MCF 10A (cell line): ENCODE measurements at regions of chr17 and their contacts with region 1.

Region 1: GRCh38 chr17:59753522-59754467 is 46.3 kb downstream of the VMP1 start:
- DNase-seq: peak; percentile 86
- H3K4me3 Mint-ChIP-seq: peak overlapping the region; percentile 56
- H3K27ac Mint-ChIP-seq: peak overlapping the region; percentile 83
- H3K4me1 Mint-ChIP-seq: peaks cover 23% of the 10 kb centered on the region
- H3K27me3 Mint-ChIP-seq: no peaks in the 10 kb centered on the region
- CTCF ChIP-seq: peak; percentile 62

Region 2: DNA sequence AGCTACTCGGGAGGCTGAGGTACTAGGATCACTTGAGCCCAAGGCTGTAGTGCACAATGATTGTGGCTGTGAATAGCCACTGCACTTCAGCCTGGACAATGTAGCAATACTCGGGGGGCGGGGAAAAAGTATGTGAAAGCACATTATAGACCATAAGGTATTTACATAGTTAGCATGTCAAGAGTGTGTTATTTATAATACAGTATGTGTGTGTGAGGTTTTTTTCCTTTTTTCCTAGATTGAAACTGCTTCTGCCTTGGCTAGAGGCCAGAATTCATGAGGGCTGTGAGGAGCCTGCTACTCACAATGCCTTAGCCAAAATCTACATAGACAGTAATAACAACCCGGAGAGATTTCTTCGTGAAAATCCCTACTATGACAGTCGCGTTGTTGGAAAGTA is 77.1 kb before region 1 on chr17:
- CTCF ChIA-PET with region 1: no interaction called
- POLR2A ChIA-PET with region 1: no interaction called
- intact Hi-C with region 1: no loop called
- DNase-seq: no peak
- H3K4me3 Mint-ChIP-seq: no peak overlapping the region
- H3K27ac Mint-ChIP-seq: no peak overlapping the region
- H3K4me1 Mint-ChIP-seq: peaks cover 8% of the 10 kb centered on the region
- H3K27me3 Mint-ChIP-seq: no peaks in the 10 kb centered on the region
- CTCF ChIP-seq: no peak

Region 3: DNA sequence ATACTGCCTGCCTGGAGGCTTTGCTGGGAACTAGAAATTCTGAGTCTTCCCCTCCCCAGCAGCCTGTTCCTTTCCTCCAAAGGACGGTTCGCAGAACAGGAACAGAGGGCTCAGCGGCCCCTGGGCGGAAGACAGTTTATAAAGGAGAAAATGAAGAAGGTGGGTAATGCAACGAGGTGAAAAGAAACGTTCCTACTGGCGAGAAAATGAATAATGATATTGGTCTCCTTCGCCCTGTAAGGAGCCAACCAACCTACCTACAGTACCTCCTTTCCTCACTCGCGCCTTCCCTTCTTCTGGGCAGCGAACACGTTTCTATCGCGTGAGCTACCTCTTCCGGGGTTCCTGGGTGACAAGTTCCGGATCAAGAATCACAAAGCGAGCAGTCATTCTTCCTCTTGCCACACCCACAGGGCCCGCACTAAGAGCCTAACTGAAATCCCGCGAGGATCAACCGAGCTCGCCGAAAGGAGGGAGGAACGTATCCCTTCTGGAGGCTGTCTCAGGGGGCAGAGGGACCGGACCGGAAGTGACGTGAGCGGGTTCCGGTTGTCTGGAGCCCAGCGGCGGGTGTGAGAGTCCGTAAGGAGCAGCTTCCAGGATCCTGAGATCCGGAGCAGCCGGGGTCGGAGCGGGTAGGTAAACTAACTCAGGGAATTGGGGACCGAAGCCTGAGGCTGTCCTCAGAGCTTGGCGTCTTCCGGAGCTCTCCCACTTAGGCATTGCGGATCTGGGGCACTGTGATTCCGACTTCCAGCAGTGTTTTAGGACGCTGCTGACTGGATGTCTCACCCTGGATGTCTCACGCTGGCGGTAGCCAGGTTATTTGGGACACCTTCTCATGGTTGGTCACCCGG is 46.5 kb before region 1 on chr17 and contains the starts of genes PTRH2 and VMP1:
- CTCF ChIA-PET with region 1: interaction called, 6 read pairs
- POLR2A ChIA-PET with region 1: interaction called, 20 read pairs
- intact Hi-C with region 1: no loop called
- DNase-seq: peak; percentile 99
- H3K4me3 Mint-ChIP-seq: peak within 1 kb of the TSS; percentile 94
- H3K27ac Mint-ChIP-seq: peak within 1 kb of the TSS; percentile 99
- H3K4me1 Mint-ChIP-seq: peaks cover 21% of the 10 kb centered on the region
- H3K27me3 Mint-ChIP-seq: no peaks in the 10 kb centered on the region
- CTCF ChIP-seq: no peak
- total RNA-seq, gene PTRH2: 47.5 and 51.7 TPM in 2 replicates
- total RNA-seq, gene VMP1: 205 and 228 TPM in 2 replicates

Region 4: GRCh38 chr17:59725691-59726090 is 28.1 kb before region 1 on chr17:
- CTCF ChIA-PET with region 1: no interaction called
- POLR2A ChIA-PET with region 1: no interaction called
- intact Hi-C with region 1: no loop called
- DNase-seq: peak; percentile 60
- H3K4me3 Mint-ChIP-seq: peak overlapping the region; percentile 19
- H3K27ac Mint-ChIP-seq: peak overlapping the region; percentile 86
- H3K4me1 Mint-ChIP-seq: peaks cover 15% of the 10 kb centered on the region
- H3K27me3 Mint-ChIP-seq: no peaks in the 10 kb centered on the region
- CTCF ChIP-seq: no peak

Region 5: DNA sequence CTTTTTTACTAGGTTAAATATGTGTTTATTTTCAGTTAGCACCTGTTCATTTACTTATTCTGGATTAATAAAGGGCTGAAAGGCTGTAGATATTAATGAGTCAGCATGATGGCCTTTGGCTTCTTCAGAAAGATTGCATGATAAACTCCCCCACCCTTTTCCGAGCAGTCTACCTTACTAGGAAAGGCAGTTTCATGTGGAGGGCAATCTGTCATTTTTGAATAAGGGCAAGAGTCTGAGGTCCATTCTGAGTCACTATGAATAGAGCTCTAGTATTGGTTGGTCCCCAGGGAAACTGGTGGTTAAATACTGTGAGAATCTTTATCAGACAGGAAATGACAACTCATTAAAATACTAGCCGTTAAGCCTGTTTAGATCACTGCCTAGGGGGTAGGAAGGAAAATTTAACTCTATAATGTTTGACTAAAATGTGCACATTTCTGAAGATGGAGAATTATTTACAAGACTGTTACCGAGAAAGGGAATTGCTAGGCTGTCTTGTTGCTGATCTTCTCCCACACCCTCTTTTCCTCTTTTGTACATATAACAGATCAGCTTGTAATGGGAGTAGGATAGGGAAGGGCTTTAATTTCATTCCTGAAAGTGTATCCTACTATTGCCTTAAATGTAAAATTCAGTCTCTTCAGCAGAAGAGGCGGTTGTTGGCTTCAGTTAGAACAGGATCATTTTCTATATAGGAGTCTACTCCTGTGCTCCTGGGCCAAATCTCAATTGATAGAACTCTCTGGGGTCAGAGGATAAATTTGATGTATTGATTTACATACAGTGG is 75.6 kb after region 1 on chr17:
- CTCF ChIA-PET with region 1: interaction called, 5 read pairs
- POLR2A ChIA-PET with region 1: interaction called, 21 read pairs
- intact Hi-C with region 1: no loop called
- DNase-seq: peak; percentile 98
- H3K4me3 Mint-ChIP-seq: peak overlapping the region; percentile 61
- H3K27ac Mint-ChIP-seq: peak overlapping the region; percentile 94
- H3K4me1 Mint-ChIP-seq: peaks cover 24% of the 10 kb centered on the region
- H3K27me3 Mint-ChIP-seq: no peaks in the 10 kb centered on the region
- CTCF ChIP-seq: no peak

Region 6: GRCh38 chr17:59859444-59860025 is 105.7 kb after region 1 on chr17:
- CTCF ChIA-PET with region 1: interaction called, 46 read pairs
- POLR2A ChIA-PET with region 1: interaction called, 3 read pairs
- intact Hi-C with region 1: loop called (anchors 1 kb)
- DNase-seq: peak; percentile 44
- H3K4me3 Mint-ChIP-seq: no peak overlapping the region
- H3K27ac Mint-ChIP-seq: no peak overlapping the region
- H3K4me1 Mint-ChIP-seq: peaks cover 5% of the 10 kb centered on the region
- H3K27me3 Mint-ChIP-seq: no peaks in the 10 kb centered on the region
- CTCF ChIP-seq: peak; percentile 56

Region 7: DNA sequence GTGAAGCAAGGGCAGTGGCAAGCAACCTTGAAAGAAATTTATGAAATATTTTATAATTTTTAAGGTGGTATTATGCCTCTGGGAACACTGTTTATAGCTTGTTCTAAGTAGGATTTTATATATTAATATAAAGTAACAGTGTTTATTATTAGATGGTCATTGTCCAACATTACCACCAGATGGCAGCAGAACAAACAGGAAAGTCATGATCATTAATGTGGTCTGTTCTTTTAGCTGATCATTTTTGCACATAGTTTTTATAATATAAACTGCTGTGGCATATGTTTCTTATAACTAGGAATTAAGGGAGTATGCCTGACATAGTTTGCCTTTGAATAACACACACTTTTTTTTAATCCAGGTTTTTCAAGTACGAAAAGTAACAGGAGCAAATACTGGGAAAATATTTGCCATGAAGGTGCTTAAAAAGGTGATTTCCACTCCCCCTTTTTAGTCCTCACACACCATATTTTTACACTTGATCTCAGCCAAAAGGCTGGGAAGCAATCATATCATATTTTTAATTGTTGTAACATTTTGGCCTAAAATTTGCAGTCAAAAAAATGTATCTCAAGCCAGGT is 160.6 kb after region 1 on chr17:
- CTCF ChIA-PET with region 1: interaction called, 9 read pairs
- POLR2A ChIA-PET with region 1: no interaction called
- intact Hi-C with region 1: loop called (anchors 1 kb)
- DNase-seq: peak; percentile 54
- H3K4me3 Mint-ChIP-seq: no peak overlapping the region
- H3K27ac Mint-ChIP-seq: no peak overlapping the region
- H3K4me1 Mint-ChIP-seq: no peaks in the 10 kb centered on the region
- H3K27me3 Mint-ChIP-seq: no peaks in the 10 kb centered on the region
- CTCF ChIP-seq: peak; percentile 36

Region 8: GRCh38 chr17:60959696-60960095 is 1205.9 kb after region 1 on chr17:
- CTCF ChIA-PET with region 1: no interaction called
- POLR2A ChIA-PET with region 1: no interaction called
- intact Hi-C with region 1: no loop called
- DNase-seq: no peak
- H3K4me3 Mint-ChIP-seq: no peak overlapping the region
- H3K27ac Mint-ChIP-seq: no peak overlapping the region
- H3K4me1 Mint-ChIP-seq: no peaks in the 10 kb centered on the region
- H3K27me3 Mint-ChIP-seq: no peaks in the 10 kb centered on the region
- CTCF ChIP-seq: no peak